OCI-LY7 (cell line): ENCODE measurements at regions of chr9 and their contacts with region 1.

Region 1: DNA sequence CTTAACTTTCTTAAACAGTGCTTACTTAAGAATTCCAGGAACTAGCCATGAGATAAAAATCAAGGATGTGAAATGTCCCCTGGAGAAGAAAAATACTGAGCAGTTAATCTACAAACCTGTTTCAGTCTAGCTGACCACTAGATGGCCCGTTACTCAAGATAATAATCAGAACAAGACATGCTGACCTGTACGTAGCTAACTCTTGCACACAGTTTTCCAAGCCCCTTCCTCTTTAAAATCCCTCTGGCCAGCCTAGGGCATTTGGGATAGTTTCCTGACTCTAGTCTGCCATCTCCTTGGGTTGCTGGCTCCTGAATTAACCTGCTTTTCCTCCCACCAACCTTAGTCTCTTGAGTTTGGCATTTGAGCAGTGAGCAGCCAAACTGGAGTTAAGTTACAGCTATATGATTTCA is 59.2 kb upstream of the TRAF1 start:
- DNase-seq: peak; percentile 76
- H3K4me3 ChIP-seq: no peak overlapping the region
- H3K27ac ChIP-seq: no peak overlapping the region
- H3K4me1 ChIP-seq: no peaks in the 10 kb centered on the region
- CTCF ChIP-seq: peak; percentile 89

Region 2: GRCh38 chr9:121059998-121060636 is 74.3 kb after region 1 on chr9:
- CTCF ChIA-PET with region 1: interaction called, 5 read pairs
- POLR2A ChIA-PET with region 1: interaction called, 4 read pairs
- intact Hi-C with region 1: loop called (anchors 2 kb)
- DNase-seq: peak; percentile 82
- H3K4me3 ChIP-seq: peak overlapping the region; percentile 11
- H3K27ac ChIP-seq: no peak overlapping the region
- H3K4me1 ChIP-seq: peaks cover 38% of the 10 kb centered on the region
- CTCF ChIP-seq: peak; percentile 95

Region 3: DNA sequence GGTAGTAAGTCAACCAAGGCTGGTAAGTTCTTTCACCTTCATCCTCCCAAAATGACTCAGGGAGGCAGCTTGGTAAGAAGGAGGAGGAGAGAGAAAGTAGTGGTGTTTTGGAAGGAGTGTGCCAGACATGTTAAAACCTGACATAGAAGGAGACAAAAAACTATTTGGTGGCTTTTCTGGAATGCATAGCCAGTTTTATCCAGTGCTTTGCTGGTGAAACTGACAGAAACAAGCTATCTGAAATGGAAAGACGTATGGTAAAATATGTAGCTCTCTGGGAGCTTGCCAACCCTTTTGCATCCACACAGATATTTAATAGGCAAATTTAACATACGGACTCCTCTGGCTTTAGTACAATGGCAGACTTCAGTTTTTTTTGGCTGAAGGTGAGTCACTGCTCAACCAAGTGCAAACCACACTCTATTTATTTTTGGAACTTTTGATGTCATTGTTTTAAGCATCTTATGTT is 170.5 kb after region 1 on chr9:
- CTCF ChIA-PET with region 1: interaction called, 3 read pairs
- POLR2A ChIA-PET with region 1: no interaction called
- intact Hi-C with region 1: loop called (anchors 10 kb)
- DNase-seq: peak; percentile 78
- H3K4me3 ChIP-seq: peak overlapping the region; percentile 56
- H3K27ac ChIP-seq: peak overlapping the region; percentile 95
- H3K4me1 ChIP-seq: peaks cover 84% of the 10 kb centered on the region
- CTCF ChIP-seq: no peak